Mucosa of descending colon (tissue), 3 donors: ENCODE measurements at regions of chr15 and their contacts with region 1.

Region 1: DNA sequence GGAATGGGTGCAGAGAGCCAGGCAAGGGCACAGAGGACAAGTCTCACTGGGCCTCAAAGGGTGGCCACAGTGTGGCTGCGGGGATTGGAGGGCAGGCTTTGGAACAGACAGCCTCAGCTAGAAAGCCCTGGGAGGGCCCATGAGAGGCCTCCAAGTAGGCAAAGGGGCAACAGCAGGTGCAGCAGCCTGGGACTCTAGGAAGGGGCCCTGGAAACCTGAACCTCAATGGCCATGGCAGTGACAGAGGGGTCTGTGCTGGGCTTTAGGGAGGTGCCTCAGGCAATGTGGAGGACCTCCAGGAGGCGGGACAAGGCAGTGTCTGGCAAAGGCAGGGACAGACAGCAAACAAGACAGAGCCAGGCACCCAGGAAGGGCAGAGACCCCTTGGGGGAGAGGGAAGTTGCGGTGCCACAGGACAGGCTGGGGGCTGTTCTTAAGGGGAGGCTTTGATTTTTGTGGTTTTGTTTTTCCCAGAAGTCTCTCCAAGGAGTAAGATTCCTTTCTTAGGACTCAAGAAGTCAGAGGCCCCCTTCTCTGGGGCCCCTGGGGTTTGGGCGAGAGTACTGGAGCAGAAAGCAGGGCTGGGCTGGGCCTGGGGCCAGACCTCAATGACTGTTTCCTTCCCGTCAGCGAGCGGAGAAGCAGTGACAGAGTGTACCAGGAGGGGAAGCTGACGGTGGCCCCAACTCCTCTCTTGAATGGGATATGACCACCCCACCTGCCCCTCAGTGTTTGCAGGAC is 9.7 kb downstream of the STOML1 start:
- DNase-seq: peak; percentile 53 to 83 (median 57)
- ATAC-seq: peak; percentile 64
- H3K4me3 ChIP-seq: no peak overlapping the region
- H3K4me1 ChIP-seq: peaks cover 5% of the 10 kb centered on the region
- CTCF ChIP-seq: no peak

Region 2: DNA sequence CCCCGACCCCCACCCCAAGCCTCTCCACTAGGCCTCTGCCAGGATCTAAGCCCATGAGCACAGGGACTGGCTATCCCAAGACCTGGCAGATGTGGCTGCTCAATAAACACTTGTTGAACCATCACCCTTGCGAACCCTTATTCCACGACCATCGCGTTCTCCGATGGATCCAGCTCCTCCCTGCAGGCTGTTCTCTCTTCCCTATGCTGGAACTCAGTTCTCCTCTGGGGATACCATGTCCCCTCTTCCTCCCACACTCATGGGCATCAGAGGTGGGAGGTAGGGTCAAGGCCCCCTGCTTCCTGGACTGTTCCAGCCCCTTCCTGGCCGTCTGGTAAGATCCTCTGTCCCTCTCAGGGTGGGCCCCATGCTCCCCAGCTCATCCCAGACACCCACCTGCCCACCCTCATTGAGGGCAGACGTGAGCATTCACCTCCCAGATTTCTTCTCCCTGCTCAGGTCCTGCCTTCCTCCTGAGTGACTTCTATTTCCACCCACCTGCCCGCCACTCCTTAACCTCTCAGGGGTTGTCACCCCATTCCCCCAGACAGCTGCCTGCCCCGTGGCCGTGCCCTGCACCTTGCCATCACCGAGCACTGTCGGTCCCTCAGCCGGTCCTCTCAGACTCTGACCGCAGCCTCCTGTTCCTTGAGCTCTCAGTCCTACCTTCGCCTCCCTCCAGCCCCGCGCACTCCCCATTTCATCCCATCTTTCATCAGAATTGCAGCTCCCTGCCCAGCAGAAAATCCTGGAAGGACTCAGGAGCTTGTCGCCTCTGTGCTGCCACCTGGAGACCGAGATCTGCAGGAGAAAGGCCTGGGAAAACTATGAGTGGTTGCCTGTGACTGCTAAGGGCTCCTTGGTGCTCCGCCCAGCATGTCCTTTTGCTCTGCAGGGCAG is 54.1 kb after region 1 on chr15:
- intact Hi-C with region 1: loop called in 1 of 2 experiments (anchors 10 kb)
- DNase-seq: peak in 2 of 3 donors; percentile 69 to 76
- ATAC-seq: peak; percentile 57
- H3K4me3 ChIP-seq: no peak overlapping the region
- H3K4me1 ChIP-seq: peaks cover 2% of the 10 kb centered on the region
- CTCF ChIP-seq: peak; percentile 23